Heart right ventricle (tissue), 16 donors: ENCODE measurements at regions of chr5 and their contacts with region 1.

Region 1: GRCh38 chr5:88883059-88883835 is at the start of gene MEF2C:
- DNase-seq: peak; percentile 81 to 90
- ATAC-seq: peak; percentile 78 to 92 (median 84)
- H3K4me3 ChIP-seq: peak within 1 kb of the TSS; percentile 54 to 83 (median 70)
- H3K27ac ChIP-seq: peak within 1 kb of the TSS; percentile 71 to 95 (median 91)
- H3K4me1 ChIP-seq: peaks cover 4 to 59% (median 38%) of the 10 kb centered on the region in 9 donors
- H3K27me3 ChIP-seq: no peaks in the 10 kb centered on the region
- CTCF ChIP-seq: no peak
- total RNA-seq, gene MEF2C: 38.8 to 88.7 (median 70.0) TPM

Region 2: GRCh38 chr5:88785391-88786219 is 97.6 kb before region 1 on chr5:
- intact Hi-C with region 1: loop called in 6 of 10 experiments (anchors 2 to 10 kb)
- DNase-seq: peak in 1 of 2 donors; percentile 80
- ATAC-seq: peak; percentile 90 to 96 (median 94)
- H3K4me3 ChIP-seq: peak overlapping the region in 6 of 10 donors; percentile 3 to 26 (median 16)
- H3K27ac ChIP-seq: peak overlapping the region; percentile 14 to 91 (median 80)
- H3K4me1 ChIP-seq: peaks cover 0 to 78% (median 48%) of the 10 kb centered on the region in 9 donors
- H3K27me3 ChIP-seq: no peaks in the 10 kb centered on the region
- CTCF ChIP-seq: no peak

Region 3: GRCh38 chr5:88833371-88834130 is 49.7 kb before region 1 on chr5:
- intact Hi-C with region 1: loop called in 6 of 10 experiments (anchors 2 to 10 kb)
- DNase-seq: peak in 1 of 2 donors; percentile 81
- ATAC-seq: peak; percentile 71 to 89 (median 83)
- H3K4me3 ChIP-seq: peak overlapping the region in 8 of 10 donors; percentile 10 to 41 (median 32)
- H3K27ac ChIP-seq: peak overlapping the region; percentile 37 to 92 (median 77)
- H3K4me1 ChIP-seq: peaks cover 4 to 100% (median 87%) of the 10 kb centered on the region in 9 donors
- H3K27me3 ChIP-seq: no peaks in the 10 kb centered on the region
- CTCF ChIP-seq: peak in 2 of 9 donors; percentile 25 to 30

Region 4: DNA sequence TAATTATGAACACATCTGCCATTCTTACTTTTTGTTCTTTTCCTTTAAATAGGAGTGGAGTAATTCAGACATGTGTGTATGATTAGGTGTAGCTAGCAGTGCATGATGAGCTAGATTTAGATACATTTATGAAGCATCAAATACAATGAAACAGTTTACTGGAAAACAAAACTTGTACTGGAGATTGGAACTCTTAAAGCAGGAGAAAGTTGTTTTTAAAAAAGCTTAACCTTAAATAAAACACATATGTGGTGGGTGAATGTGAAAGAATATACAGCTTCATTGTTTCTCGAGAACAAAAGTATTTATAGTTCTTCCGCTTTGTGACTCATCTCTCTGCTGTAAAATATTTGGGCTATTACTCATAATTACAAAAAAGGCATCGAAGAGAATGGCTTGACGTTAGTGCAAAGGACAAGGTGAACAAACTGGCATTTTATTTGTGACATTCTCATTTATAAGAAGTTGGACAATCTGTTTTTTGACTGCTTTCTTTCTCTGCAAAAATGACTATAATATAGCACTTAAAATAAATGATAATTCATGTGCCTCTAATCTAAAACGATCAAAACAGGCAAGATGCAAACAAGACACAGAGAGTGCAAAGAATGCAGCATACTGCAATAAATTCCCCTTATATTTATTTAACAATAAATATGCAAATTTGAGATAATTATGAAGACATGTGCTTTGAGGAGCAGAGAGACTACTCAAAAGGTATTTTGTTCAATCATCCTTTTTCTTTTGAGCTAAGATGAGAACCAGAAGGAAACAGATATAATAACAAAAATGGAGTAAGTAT is 1047.5 kb after region 1 on chr5:
- intact Hi-C with region 1: loop called in 1 of 10 experiments (anchors 5 kb)
- DNase-seq: no peak
- ATAC-seq: peak in 6 of 8 donors; percentile 59 to 88 (median 78)
- H3K4me3 ChIP-seq: no peak overlapping the region
- H3K27ac ChIP-seq: peak overlapping the region in 8 of 10 donors; percentile 25 to 62 (median 43)
- H3K4me1 ChIP-seq: peaks cover 0 to 49% (median 29%) of the 10 kb centered on the region in 9 donors
- H3K27me3 ChIP-seq: no peaks in the 10 kb centered on the region
- CTCF ChIP-seq: no peak

Region 5: GRCh38 chr5:90264689-90265544 is 1381.7 kb after region 1 on chr5:
- intact Hi-C with region 1: loop called in 2 of 10 experiments (anchors 10 kb)
- DNase-seq: peak; percentile 40 to 77
- ATAC-seq: peak in 7 of 8 donors; percentile 47 to 92 (median 78)
- H3K4me3 ChIP-seq: no peak overlapping the region
- H3K27ac ChIP-seq: no peak overlapping the region
- H3K4me1 ChIP-seq: peaks cover 0 to 5% (median 4%) of the 10 kb centered on the region in 9 donors
- H3K27me3 ChIP-seq: no peaks in the 10 kb centered on the region
- CTCF ChIP-seq: peak; percentile 84 to 98 (median 93)